ENCODE measurements at regions of chr9 and their contacts with region 1.

Region 1: DNA sequence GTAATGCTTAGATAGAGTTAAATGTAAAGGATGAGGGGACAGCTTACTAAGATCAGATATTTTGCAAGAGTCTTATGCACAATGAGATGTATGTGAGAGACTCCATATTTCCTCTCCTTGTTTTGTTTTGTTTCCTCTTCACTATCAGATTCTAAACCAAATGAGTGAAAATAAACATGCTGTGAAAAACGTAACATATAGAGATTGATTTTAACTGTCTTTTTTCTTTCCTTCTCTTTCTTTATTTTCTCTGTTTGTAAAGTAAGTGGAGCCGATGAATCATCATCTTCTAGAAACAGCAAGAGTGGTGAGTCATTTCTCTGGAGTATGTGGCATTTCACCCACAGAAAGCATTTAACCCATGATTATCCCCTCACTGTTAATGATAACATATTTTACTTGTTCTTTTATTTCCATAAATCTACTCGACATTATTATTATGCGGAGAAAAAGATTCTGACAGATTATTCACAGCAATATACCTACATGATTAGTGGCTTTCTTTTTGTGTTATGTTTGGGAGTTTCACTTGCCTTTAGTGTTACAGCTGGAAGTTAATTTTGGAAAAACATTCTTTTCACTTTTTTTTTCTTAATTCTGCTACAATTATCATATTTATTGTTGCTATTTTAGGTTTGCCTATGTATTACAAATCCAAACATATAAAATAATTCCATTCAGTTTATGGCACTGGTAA is 2.1 kb upstream of the ANXA1 start:
- DNase-seq: no peak
- H3K4me3 ChIP-seq: peak overlapping the region; percentile 12 to 45
- H3K27ac ChIP-seq: peak overlapping the region; percentile 70 to 81
- H3K4me1 ChIP-seq: peaks cover 16 to 37% of the 10 kb centered on the region in 2 donors
- H3K27me3 ChIP-seq: no peaks in the 10 kb centered on the region
- CTCF ChIP-seq: no peak

Region 2: DNA sequence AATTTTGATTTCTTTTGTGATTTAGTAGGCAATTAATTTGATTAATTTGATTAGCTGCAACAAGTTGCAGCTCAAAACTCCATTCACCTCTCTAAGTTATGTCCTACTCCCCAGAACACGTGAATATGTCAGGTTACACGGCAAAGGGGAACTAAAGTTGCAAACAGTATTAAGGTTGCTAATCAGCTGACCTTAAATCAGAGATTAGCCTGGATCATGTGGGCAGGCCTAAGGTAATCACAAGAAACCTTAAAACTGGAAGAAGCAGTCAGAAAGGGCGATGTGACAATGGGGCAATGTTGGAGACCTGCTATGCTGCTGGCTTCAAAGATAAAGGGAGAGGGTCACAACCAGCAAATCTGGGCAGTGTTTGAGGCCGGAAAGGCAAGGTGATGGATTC is 45.2 kb before region 1 on chr9:
- intact Hi-C with region 1: loop called (anchors 2 kb)
- DNase-seq: no peak
- H3K4me3 ChIP-seq: no peak overlapping the region
- H3K27ac ChIP-seq: no peak overlapping the region
- H3K4me1 ChIP-seq: no peaks in the 10 kb centered on the region
- H3K27me3 ChIP-seq: no peaks in the 10 kb centered on the region
- CTCF ChIP-seq: no peak

Region 3: GRCh38 chr9:73132034-73132776 is 17.3 kb before region 1 on chr9:
- intact Hi-C with region 1: loop called (anchors 1 kb)
- DNase-seq: peak; percentile 25 to 88
- H3K4me3 ChIP-seq: peak overlapping the region; percentile 35 to 58
- H3K27ac ChIP-seq: peak overlapping the region; percentile 72 to 77
- H3K4me1 ChIP-seq: peaks cover 0 to 17% of the 10 kb centered on the region in 2 donors
- H3K27me3 ChIP-seq: no peaks in the 10 kb centered on the region
- CTCF ChIP-seq: no peak

Region 4: GRCh38 chr9:74095925-74096324 is 946.4 kb after region 1 on chr9:
- intact Hi-C with region 1: no loop called
- DNase-seq: no peak
- H3K4me3 ChIP-seq: no peak overlapping the region
- H3K27ac ChIP-seq: no peak overlapping the region
- H3K4me1 ChIP-seq: no peaks in the 10 kb centered on the region
- H3K27me3 ChIP-seq: no peaks in the 10 kb centered on the region
- CTCF ChIP-seq: no peak

Measured in ascending aorta (tissue), 2 donors.